GM23248 (cell line): ENCODE measurements at regions of chr6 and their contacts with region 1.

Region 1: DNA sequence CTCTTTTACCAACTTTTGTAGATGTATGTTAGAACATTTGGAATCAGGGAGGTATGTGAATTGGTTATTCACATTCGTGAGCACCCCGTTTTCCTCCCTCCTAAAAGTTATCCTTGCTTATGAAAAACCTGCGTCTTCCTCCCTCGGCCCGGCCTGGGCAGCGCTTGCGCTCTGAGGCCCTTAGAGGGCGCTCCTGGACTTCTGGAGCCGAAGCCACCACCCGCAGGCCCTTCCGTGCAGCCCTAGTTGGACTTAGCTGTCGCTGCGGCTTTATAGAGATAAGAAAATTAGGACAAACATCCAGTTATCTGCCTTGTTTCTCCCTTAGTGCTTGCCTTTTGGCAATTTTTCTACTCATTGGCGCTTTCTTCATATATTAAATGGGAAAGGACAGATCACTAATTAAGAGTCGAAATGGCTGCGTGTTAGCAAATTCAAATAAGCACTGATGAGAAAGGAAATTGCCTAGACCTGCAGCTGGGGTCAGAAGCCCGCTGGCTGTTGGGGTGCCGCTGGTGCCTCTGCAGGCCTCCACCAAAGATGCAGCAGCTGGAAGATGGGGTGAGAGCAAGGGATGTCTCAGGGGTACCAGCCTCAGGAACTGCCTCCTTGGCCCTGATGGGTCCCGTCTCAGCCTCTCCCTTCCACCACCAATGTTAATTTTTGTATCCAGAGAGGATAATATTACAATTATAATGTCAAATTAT is 5.2 kb downstream of the FNDC1 start:
- DNase-seq: peak; percentile 91
- H3K4me3 ChIP-seq: no peak overlapping the region
- H3K27ac ChIP-seq: no peak overlapping the region
- H3K4me1 ChIP-seq: peaks cover 21% of the 10 kb centered on the region
- H3K27me3 ChIP-seq: no peaks in the 10 kb centered on the region

Region 2: DNA sequence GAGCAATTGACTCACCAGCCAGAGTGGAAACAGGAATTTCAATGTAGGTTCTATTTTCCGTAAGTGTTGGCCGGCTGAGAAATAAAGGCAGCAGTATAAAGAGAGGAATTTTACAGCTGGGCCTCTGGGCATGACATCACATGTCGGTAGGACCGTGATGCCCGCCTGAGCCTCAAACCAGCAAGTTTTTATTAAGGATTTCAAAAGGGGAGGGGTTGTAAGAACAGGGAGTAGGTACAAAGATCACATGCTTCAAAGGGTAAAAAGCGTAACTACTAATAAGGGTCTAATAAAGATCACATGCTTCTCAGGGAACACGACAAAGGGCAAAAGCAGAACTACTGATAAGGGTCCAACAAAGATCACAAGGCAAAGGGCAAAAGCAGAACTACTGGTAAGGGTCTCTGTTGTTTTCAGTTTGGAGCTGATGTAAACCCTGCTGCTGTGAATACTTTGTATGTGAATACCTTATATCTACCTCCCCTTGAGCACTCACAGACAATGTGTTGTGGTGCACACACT is 871.1 kb before region 1 on chr6:
- in situ Hi-C with region 1: no loop called
- DNase-seq: no peak
- H3K4me3 ChIP-seq: no peak overlapping the region
- H3K27ac ChIP-seq: no peak overlapping the region
- H3K4me1 ChIP-seq: no peaks in the 10 kb centered on the region
- H3K27me3 ChIP-seq: no peaks in the 10 kb centered on the region

Region 3: DNA sequence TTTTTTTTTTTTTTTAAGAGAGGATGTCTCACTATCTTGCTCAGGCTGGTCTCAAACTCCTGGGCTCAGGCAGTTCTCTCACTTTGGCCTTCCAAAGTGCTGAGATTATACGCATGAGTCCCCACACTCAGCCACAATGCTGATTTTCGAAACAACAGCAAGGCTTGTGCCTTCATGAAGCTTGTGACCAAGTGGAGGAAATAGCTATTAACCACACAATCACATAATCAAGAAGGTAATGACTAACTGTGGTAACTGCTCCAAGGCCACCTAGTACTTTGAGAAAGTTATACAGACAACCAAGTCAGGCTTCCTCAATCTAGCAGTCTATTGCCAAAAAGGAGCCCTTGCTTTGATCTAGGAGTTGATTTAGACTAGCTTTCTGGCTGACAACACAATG is 472.3 kb after region 1 on chr6:
- in situ Hi-C with region 1: loop called (anchors 10 kb)
- DNase-seq: peak; percentile 64
- H3K4me3 ChIP-seq: no peak overlapping the region
- H3K27ac ChIP-seq: no peak overlapping the region
- H3K4me1 ChIP-seq: peaks cover 14% of the 10 kb centered on the region
- H3K27me3 ChIP-seq: no peaks in the 10 kb centered on the region